ENCODE measurements at regions of chrX and their contacts with region 1.

Region 1: GRCh38 chrX:47523297-47523696 is 37.7 kb upstream of the ARAF start:
- DNase-seq: peak; percentile 69
- H3K4me3 Mint-ChIP-seq: peak overlapping the region; percentile 70
- H3K27ac Mint-ChIP-seq: no peak overlapping the region
- H3K4me1 Mint-ChIP-seq: no peaks in the 10 kb centered on the region
- H3K27me3 Mint-ChIP-seq: no peaks in the 10 kb centered on the region

Region 2: DNA sequence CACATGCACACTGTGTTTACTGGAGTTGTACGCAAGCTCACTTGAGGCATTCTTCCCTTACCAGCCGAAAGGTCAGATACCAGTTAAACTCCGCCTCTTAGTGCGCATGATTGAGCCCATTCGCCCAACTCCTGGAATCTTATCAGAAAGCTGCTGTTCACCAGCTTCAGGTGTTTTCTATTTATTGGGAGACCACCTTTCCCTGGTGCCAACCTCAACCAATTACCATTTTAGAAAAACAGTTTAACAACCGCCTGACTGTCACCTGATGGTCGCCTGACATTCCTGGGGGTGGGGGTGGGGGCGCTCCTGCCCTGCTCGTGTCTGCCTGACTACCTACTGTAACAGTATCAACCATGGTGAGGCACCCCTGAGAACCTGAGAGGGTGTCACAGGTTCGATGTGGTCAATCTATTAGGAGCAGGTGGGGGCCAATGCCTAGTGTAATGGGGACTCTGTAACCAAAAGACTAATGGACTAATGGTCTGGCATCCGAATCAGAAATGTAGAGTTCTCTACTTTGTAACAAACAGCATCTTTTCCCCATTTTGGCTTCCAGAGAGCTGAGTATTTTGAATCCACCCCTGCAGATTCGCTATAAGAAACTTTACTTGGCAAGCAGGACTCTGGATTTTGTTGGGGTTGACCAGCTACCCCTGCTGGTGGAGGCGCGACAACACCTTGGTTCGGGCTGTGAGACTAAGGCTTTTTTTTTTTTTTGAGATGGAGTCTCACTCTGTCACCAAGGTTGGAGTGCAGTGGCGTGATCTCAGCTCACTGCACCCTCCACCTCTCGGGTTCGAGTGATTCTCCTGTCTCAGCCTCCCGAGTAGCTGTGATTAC is 211.1 kb before region 1 on chrX:
- intact Hi-C with region 1: loop called (anchors 5 kb)
- DNase-seq: peak; percentile 1
- H3K4me3 Mint-ChIP-seq: no peak overlapping the region
- H3K27ac Mint-ChIP-seq: no peak overlapping the region
- H3K4me1 Mint-ChIP-seq: no peaks in the 10 kb centered on the region
- H3K27me3 Mint-ChIP-seq: no peaks in the 10 kb centered on the region

Region 3: DNA sequence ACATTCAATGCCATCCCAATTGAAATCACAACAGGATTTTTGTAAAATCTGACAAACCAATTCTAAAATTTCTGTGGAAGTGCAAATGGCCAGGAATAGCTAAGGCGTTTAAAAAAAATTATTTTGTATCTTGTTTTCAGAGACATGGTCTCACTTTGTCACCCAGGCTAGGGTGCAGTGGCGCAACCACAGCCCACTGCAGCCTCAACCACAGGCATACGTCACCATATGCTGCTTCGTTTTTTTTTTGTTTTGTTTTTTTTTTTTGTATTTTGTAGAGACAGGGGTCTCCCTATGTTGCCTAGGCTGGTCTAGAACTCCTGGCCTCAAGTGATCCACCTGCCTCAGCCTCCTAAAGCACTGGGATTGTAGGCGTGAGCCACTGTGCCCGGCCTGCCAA is 64.8 kb before region 1 on chrX:
- intact Hi-C with region 1: no loop called
- DNase-seq: no peak
- H3K4me3 Mint-ChIP-seq: no peak overlapping the region
- H3K27ac Mint-ChIP-seq: no peak overlapping the region
- H3K4me1 Mint-ChIP-seq: no peaks in the 10 kb centered on the region
- H3K27me3 Mint-ChIP-seq: no peaks in the 10 kb centered on the region